MCF 10A (cell line): ENCODE measurements at regions of chr17 and their contacts with region 1.

Region 1: DNA sequence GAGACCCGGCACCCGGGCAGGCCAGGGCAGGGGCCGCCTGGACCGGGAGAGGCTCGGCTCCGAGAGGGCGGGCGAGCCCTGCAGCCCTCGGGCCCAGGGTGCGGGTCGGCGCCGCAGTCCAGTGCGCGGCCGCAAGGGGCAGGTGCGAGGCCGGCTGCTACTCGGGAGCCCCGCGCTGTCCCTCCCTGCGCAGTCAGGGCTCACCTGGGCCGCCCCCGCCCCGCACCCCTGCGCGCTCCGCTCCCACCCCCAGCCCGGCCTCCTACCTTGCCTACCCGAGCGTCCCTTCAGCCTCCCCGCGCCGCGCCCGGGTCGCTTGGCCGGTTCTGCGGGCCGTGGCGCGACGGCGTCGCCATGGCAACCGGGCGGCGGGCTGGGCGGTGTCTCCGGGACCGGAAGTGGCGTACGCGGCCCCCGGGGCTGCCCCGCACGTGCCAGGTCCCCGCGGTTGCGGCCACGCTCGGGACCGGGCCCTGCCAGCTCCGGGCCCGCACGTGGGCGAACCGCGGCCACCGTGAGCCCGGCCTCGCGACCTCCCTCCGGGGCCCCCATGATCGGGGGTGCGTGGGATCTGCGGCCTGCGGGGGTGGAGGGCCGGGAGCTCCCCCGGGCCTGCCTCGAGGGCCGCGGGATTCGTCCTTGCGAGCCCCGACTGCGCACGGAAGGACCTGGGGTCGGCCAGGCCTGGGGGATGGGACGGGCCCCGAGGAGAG is at the start of gene CYB561:
- DNase-seq: peak; percentile 70
- H3K4me3 Mint-ChIP-seq: peak within 1 kb of the TSS; percentile 68
- H3K27ac Mint-ChIP-seq: peak within 1 kb of the TSS; percentile 90
- H3K4me1 Mint-ChIP-seq: peaks cover 16% of the 10 kb centered on the region
- H3K27me3 Mint-ChIP-seq: no peaks in the 10 kb centered on the region
- CTCF ChIP-seq: peak; percentile 64
- total RNA-seq, gene CYB561: 57.2 and 62.0 TPM in 2 replicates

Region 2: DNA sequence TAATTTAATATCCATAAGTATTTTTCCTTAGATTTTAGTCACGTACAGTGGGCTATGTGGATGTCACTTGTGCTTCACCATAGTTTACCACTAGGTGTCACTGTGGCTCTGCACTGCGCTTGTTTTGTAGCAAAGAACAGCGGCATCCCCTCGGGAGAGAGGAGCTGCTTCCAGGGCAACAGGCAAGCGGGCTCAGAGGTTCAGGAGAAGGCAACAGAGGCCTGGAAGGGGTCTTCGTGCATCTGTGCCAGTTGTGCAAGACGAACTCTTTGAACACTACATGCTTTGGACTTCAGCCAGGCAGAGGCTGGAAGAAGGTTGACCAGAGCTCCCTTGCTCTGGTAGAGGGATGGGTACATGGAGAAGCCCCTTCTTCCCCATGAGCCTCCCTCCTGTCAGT is 20.7 kb before region 1 on chr17:
- CTCF ChIA-PET with region 1: interaction called, 23 read pairs
- POLR2A ChIA-PET with region 1: interaction called, 6 read pairs
- intact Hi-C with region 1: no loop called
- DNase-seq: peak; percentile 79
- H3K4me3 Mint-ChIP-seq: no peak overlapping the region
- H3K27ac Mint-ChIP-seq: no peak overlapping the region
- H3K4me1 Mint-ChIP-seq: peaks cover 11% of the 10 kb centered on the region
- H3K27me3 Mint-ChIP-seq: no peaks in the 10 kb centered on the region
- CTCF ChIP-seq: peak; percentile 94

Region 3: DNA sequence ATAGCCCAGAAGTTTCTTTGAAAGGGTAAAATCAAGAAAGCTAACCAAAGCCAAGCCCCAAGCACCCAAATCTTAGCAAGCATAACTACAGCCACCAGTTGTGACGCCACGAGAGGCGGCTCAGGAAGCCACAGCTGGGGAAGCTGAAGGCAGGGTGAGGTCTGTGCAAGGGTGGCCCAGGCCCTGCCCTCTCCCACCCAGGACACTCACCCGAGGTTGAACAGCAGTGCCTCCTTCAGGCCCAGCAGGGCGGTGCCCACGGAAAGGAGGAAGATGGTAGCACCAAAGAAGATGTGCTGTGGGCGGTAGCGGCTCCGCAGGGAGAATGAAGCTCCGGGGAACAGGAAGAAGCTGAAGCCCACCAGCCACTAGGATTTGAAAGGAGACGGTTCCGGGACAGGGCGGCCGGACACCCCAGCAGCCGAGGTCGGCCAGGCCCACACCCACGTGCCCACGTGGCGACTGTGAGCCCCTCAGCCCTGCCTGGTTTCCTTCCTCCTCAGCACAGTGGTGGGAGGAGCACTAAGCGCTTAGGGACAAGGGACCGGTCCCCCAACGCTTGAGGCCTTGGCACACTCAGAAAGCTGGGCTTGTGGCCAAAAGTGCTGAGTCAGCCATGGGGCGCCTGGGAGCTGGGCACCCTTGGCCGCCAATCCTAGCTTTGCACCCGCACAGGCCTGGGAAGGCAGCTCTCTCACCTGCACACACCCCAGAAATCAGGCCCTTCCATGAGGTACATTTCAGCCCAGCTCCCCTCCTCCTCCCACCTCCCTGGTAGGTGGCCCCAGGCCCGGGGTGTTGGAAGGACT is 11.1 kb before region 1 on chr17:
- CTCF ChIA-PET with region 1: interaction called, 28 read pairs
- POLR2A ChIA-PET with region 1: interaction called, 31 read pairs
- intact Hi-C with region 1: no loop called
- DNase-seq: peak; percentile 94
- H3K4me3 Mint-ChIP-seq: peak overlapping the region; percentile 13
- H3K27ac Mint-ChIP-seq: no peak overlapping the region
- H3K4me1 Mint-ChIP-seq: peaks cover 43% of the 10 kb centered on the region
- H3K27me3 Mint-ChIP-seq: no peaks in the 10 kb centered on the region
- CTCF ChIP-seq: peak; percentile 52

Region 4: GRCh38 chr17:63459952-63460393 is 13.8 kb after region 1 on chr17:
- CTCF ChIA-PET with region 1: interaction called, 17 read pairs
- POLR2A ChIA-PET with region 1: interaction called, 25 read pairs
- intact Hi-C with region 1: no loop called
- DNase-seq: no peak
- H3K4me3 Mint-ChIP-seq: no peak overlapping the region
- H3K27ac Mint-ChIP-seq: no peak overlapping the region
- H3K4me1 Mint-ChIP-seq: peaks cover 26% of the 10 kb centered on the region
- H3K27me3 Mint-ChIP-seq: no peaks in the 10 kb centered on the region
- CTCF ChIP-seq: no peak

Region 5: DNA sequence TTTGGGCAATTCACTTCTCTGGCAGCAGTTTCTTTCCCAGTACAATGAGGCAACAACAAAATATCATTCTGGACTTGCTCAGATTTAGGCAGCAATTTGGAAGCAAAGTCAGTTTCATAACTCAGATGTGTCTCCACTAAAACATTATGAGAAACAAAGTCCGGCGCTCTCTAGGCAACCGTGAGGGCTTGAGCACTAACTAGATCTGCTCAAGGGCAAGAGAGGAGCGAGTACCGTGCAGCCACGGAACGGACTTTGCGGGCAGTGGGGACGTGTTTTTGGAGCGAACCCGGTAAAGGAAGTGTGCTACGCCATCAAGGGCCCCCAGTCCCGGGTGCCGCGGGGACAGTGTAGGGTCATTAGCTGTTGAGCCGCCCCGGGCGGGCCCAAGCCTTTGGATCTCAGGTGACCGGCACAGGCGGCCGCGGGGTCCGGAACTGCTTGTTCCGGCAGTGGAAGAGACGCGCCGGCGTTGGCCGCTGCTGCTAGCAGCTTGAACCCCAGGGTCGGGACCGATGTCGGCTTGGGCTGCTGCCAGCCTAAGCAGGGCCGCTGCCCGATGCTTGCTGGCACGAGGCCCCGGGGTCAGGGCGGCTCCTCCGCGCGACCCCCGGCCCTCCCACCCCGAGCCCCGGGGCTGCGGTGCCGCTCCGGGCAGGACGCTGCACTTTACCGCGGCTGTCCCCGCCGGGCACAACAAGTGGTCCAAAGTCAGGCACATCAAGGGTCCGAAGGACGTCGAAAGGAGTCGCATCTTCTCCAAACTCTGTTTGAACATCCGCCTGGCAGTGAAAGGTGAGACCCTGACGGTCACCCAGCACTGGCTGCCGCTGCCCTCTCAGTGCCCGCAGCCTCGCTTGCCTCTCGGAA is 154.7 kb after region 1 on chr17 and contains the start of gene TACO1:
- CTCF ChIA-PET with region 1: interaction called, 6 read pairs
- POLR2A ChIA-PET with region 1: interaction called, 13 read pairs
- intact Hi-C with region 1: no loop called
- DNase-seq: peak; percentile 76
- H3K4me3 Mint-ChIP-seq: peak within 1 kb of the TSS; percentile 79
- H3K27ac Mint-ChIP-seq: peak within 1 kb of the TSS; percentile 88
- H3K4me1 Mint-ChIP-seq: peaks cover 4% of the 10 kb centered on the region
- H3K27me3 Mint-ChIP-seq: no peaks in the 10 kb centered on the region
- CTCF ChIP-seq: no peak
- total RNA-seq, gene TACO1: 36.5 and 38.7 TPM in 2 replicates